ENCODE measurements at regions of chr17 and their contacts with region 1.

Region 1: GRCh38 chr17:63741221-63742049 is at the start of gene STRADA:
- DNase-seq: peak; percentile 97 to 99 (median 98)
- ATAC-seq: peak; percentile 96
- H3K4me3 ChIP-seq: peak within 1 kb of the TSS; percentile 84
- H3K27ac ChIP-seq: peak within 1 kb of the TSS; percentile 87
- H3K4me1 ChIP-seq: peaks cover 4 to 18% of the 10 kb centered on the region in 2 experiments; a peak in 3 of 5 replicates
- H3K27me3 ChIP-seq: no peaks in the 10 kb centered on the region
- CTCF ChIP-seq: no peak
- EP300 ChIP-seq: no peak
- POLR2A ChIP-seq: peak; percentile 88
- RAD21 ChIP-seq: peak in 1 of 2 experiments; percentile 15; a peak in 2 of 4 replicates
- polyA plus RNA-seq, gene STRADA: 6.6 to 12.5 TPM

Region 2: GRCh38 chr17:63760771-63761539 is 19.5 kb after region 1 on chr17:
- CTCF ChIA-PET with region 1: no interaction called
- POLR2A ChIA-PET with region 1: interaction called, 15 read pairs
- in situ Hi-C with region 1: no loop called
- intact Hi-C with region 1: no loop called
- DNase-seq: no peak
- ATAC-seq: no peak
- H3K4me3 ChIP-seq: no peak overlapping the region
- H3K27ac ChIP-seq: no peak overlapping the region
- H3K4me1 ChIP-seq: no peaks in the 10 kb centered on the region
- H3K27me3 ChIP-seq: no peaks in the 10 kb centered on the region
- CTCF ChIP-seq: no peak
- EP300 ChIP-seq: no peak
- POLR2A ChIP-seq: no peak
- RAD21 ChIP-seq: no peak